Activated T-helper 1 cell treated with anti-CD3 and anti-CD28 coated beads, Interleukin-12 subunit alpha, Interleukin-12 subunit beta, Interleukin-2, Interleukin-4 antibody, amounts not matched to agents 30 ng/mL and 10 ng/mL and 1 ng/mL, durations not matched to agents 14 hours and 24 hours and 36 hours (primary cell): ENCODE measurements at regions of chr5 and their contacts with region 1.

Region 1: GRCh38 chr5:169583424-169584204 is at the start of gene SPDL1:
- DNase-seq: peak; percentile 94
- H3K4me3 Mint-ChIP-seq: peak within 1 kb of the TSS; percentile 98
- H3K27ac Mint-ChIP-seq: peak within 1 kb of the TSS; percentile 85
- H3K4me1 Mint-ChIP-seq: peaks cover 46% of the 10 kb centered on the region
- H3K27me3 Mint-ChIP-seq: peaks cover 7% of the 10 kb centered on the region
- total RNA-seq, gene SPDL1: 34.1 and 41.0 TPM in 2 replicates

Region 2: GRCh38 chr5:168579488-168580226 is 1004.0 kb before region 1 on chr5:
- intact Hi-C with region 1: loop called (anchors 1 kb)
- DNase-seq: peak; percentile 95
- H3K4me3 Mint-ChIP-seq: peak overlapping the region; percentile 88
- H3K27ac Mint-ChIP-seq: peak overlapping the region; percentile 96
- H3K4me1 Mint-ChIP-seq: peaks cover 46% of the 10 kb centered on the region
- H3K27me3 Mint-ChIP-seq: peaks cover 3% of the 10 kb centered on the region

Region 3: DNA sequence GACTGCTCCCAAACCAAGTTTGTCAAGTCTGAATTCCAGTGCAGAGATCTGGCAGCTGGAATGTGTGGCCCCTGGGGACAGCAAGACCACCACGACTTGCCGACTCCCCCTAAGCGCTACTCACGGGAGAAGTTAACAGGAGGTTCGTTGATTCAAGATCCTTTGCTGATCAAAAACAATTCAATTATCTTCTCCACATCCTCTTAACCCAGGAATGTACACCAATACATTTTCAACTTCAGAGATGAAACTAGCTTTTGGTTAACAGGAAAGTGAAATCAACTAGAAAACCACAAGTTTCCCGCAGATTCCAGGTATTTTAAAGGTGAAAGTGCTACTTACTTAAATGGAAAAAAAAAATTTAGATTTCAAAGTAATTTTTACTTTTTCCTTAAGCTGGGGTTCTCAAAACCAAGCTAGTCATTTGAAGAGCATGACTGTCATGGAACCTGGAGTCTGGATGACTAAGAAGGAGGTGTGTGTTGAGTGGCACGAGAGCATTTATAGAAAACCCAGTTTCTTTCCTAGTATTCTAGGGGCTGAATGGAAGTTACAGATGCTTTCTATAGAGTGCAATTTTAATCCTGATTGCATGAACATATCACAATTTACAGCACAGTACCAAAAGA is 746.9 kb before region 1 on chr5:
- intact Hi-C with region 1: loop called (anchors 5 kb)
- DNase-seq: no peak
- H3K4me3 Mint-ChIP-seq: peak overlapping the region; percentile 28
- H3K27ac Mint-ChIP-seq: peak overlapping the region; percentile 23
- H3K4me1 Mint-ChIP-seq: peaks cover 15% of the 10 kb centered on the region
- H3K27me3 Mint-ChIP-seq: peaks cover 7% of the 10 kb centered on the region

Region 4: GRCh38 chr5:169637085-169637548 is 53.5 kb after region 1 on chr5 and contains the start of gene DOCK2:
- intact Hi-C with region 1: loop called (anchors 1 kb)
- DNase-seq: peak; percentile 68
- H3K4me3 Mint-ChIP-seq: peak within 1 kb of the TSS; percentile 86
- H3K27ac Mint-ChIP-seq: peak within 1 kb of the TSS; percentile 92
- H3K4me1 Mint-ChIP-seq: peaks cover 57% of the 10 kb centered on the region
- H3K27me3 Mint-ChIP-seq: no peaks in the 10 kb centered on the region
- total RNA-seq, gene DOCK2: 214 and 216 TPM in 2 replicates

Region 5: DNA sequence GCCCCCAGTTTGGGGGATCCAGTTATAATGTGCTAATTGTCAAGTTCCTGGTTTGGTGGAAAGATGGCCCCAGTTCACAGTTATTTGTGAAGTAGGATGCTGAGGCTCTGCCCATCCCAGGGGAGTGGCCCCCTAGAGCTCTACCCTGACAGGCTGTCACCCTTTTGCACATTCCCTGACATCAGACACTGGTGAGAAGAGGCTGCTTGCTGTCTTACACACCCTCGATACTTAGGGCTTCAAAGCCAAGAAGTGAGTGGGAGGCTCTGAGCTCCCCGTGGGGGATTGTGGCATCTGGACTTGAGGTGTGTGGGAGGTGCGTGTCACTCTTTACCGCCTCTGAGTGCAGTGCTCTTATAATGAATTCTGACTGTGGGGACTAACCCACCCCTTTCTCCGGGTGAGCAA is 221.9 kb after region 1 on chr5:
- intact Hi-C with region 1: loop called (anchors 10 kb)
- DNase-seq: peak; percentile 25
- H3K4me3 Mint-ChIP-seq: peak overlapping the region; percentile 51
- H3K27ac Mint-ChIP-seq: peak overlapping the region; percentile 97
- H3K4me1 Mint-ChIP-seq: peaks cover 53% of the 10 kb centered on the region
- H3K27me3 Mint-ChIP-seq: no peaks in the 10 kb centered on the region

Region 6: DNA sequence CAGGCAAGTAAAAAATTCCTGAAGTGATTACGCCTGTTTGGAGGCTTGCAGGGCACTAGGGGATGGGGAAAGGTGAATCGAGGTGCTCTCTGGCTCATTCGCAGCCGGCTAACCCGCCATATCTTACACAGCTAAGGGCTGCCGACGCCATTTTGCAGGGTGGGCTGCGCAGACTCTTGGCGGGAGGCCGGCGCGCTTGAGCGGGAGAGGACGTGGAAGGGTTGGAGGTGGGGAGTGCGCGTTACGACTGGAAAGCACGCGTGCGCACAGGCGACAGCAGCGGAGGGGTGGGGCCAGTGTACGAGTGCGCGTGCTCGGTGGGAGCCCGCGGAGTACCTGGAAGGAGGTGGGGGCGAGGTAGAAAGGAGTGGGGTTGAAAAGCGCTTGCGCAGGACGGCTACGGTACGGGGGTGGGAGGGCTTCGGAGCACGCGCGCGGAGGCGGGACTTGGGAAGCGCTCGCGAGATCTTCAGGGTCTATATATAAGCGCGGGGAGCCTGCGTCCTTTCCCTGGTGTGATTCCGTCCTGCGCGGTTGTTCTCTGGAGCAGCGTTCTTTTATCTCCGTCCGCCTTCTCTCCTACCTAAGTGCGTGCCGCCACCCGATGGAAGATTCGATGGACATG is 1803.8 kb after region 1 on chr5 and contains the start of gene NPM1:
- intact Hi-C with region 1: loop called (anchors 5 kb)
- DNase-seq: peak; percentile 97
- H3K4me3 Mint-ChIP-seq: peak within 1 kb of the TSS; percentile 97
- H3K27ac Mint-ChIP-seq: peak within 1 kb of the TSS; percentile 98
- H3K4me1 Mint-ChIP-seq: peaks cover 43% of the 10 kb centered on the region
- H3K27me3 Mint-ChIP-seq: peaks cover 8% of the 10 kb centered on the region
- total RNA-seq, gene NPM1: 2,729 and 2,809 TPM in 2 replicates